Calu3 (cell line): ENCODE measurements at regions of chr6 and their contacts with region 1.

Region 1: DNA sequence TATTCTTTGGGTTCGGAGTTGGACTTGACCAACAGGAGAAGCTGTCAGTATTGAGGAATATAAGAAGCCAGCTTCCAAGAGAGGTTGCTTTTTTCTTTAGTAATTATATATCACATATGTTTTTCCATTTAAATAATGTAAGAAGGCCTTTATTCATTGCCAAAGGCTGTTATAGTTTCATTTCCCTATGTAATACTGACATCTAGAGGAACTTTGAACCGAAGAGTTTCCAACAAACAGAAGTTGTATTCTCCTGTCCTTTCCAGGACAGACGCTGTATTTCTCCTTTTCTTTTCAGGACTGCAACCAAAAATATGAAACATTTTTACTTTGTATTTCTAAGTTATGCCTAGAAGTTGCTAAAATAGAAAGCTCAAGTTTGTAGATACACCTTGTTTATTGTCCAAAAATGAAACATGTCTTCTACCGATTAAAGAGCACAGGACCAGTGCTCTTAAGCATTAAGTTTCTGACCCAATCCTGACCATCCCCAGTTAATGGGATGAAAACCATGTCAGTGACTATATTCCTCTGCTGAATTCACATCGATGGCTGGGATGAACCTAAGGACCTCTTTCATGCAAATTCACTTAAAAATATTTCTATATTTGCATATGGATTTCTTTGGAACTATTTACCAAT is 55.1 kb downstream of the MYLK4 start:
- DNase-seq: no peak
- H3K4me3 Mint-ChIP-seq: no peak overlapping the region
- H3K27ac Mint-ChIP-seq: no peak overlapping the region
- H3K4me1 Mint-ChIP-seq: no peaks in the 10 kb centered on the region
- H3K27me3 Mint-ChIP-seq: no peaks in the 10 kb centered on the region
- CTCF ChIP-seq: no peak

Region 2: GRCh38 chr6:2221726-2222274 is 473.8 kb before region 1 on chr6:
- CTCF ChIA-PET with region 1: no interaction called
- intact Hi-C with region 1: loop called (anchors 10 kb)
- DNase-seq: no peak
- H3K4me3 Mint-ChIP-seq: peak overlapping the region; percentile 63
- H3K27ac Mint-ChIP-seq: peak overlapping the region; percentile 56
- H3K4me1 Mint-ChIP-seq: peaks cover 47% of the 10 kb centered on the region
- H3K27me3 Mint-ChIP-seq: no peaks in the 10 kb centered on the region
- CTCF ChIP-seq: no peak

Region 3: GRCh38 chr6:3337521-3338350 is 642.2 kb after region 1 on chr6:
- CTCF ChIA-PET with region 1: no interaction called
- intact Hi-C with region 1: no loop called
- DNase-seq: peak; percentile 20
- H3K4me3 Mint-ChIP-seq: peak overlapping the region; percentile 22
- H3K27ac Mint-ChIP-seq: no peak overlapping the region
- H3K4me1 Mint-ChIP-seq: peaks cover 18% of the 10 kb centered on the region
- H3K27me3 Mint-ChIP-seq: peaks cover 13% of the 10 kb centered on the region
- CTCF ChIP-seq: no peak